Esophagus muscularis mucosa (tissue), 4 donors: ENCODE measurements at regions of chr4 and their contacts with region 1.

Region 1: DNA sequence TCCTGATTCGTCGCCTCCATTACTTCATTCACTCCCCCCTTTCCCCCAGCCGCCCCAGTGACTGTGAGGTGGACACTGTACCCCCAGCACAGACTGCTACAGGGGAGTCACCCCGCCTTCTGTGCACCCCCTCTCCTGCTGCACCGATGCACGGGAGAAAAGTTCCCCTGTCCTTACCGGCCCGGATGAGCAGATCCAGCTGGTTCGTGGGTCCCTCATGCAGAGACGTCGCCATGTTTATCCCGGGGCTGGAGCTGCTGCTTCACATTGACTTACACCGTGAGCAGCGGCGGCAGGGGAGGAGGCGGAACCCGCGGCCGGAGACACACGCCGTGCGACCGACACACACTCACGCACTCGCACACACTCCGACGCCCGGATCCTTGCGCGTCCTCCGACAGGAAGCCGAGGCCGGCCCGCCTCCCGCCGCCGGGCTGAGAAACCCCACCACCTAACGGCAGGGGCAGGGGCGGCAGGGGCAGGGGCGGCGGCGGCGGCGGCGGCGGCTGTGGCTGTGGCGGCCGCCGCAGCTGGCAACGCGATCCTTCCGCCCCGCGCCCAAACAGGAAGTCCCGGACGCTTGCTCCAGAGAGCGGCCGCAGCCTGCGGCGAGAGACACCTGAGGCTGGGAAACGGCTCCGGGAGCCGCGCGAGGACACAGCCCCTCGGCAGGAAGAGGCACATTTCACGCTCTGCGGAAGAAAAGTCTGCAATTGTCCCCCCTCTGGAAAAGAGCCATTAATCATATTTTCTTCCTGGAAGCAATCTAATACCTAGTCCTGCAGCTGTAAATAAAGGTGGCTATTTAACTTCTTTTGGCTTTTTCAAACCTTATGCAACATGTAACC is 68.6 kb downstream of the NOCT start:
- DNase-seq: peak; percentile 95
- H3K4me3 ChIP-seq: peak overlapping the region; percentile 70 to 89 (median 78)
- H3K27ac ChIP-seq: peak overlapping the region; percentile 90 to 97 (median 96)
- H3K4me1 ChIP-seq: peaks cover 30 to 49% (median 43%) of the 10 kb centered on the region in 4 donors
- H3K27me3 ChIP-seq: no peaks in the 10 kb centered on the region
- CTCF ChIP-seq: peak; percentile 30 to 46 (median 34)
- EP300 ChIP-seq: no peak
- POLR2A ChIP-seq: no peak

Region 2: DNA sequence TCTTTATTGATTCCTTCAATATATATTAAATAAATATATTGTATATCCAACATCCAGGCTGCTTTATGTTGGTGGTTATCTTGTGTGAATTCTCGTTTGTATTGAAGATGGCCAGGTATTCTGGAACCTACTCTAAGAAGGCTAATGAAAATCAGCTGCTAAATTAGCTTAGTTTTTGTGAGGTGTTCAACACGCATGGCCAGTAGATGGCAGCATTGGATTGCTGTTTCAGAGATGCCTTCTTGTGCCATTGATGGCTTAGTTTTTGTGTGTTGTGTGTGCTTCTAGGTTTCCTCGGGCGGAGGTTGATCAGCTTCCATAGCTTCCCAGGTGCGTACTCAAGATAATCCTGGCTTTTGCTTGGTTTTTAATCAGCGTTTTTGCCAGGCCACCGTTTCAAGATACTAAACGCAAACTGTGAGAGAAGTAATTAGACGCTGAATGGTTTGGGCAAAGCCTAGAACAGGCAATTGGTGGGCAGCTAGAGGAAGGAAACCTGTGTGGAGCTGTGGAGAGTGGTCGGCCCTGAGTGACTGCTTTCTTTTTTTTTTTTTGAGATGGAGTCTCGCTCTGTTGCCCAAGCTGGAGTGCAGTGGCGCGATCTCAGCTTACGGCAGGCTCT is 53.5 kb before region 1 on chr4:
- intact Hi-C with region 1: loop called (anchors 5 kb)
- DNase-seq: no peak
- H3K4me3 ChIP-seq: no peak overlapping the region
- H3K27ac ChIP-seq: no peak overlapping the region
- H3K4me1 ChIP-seq: peaks cover 3 to 48% (median 13%) of the 10 kb centered on the region in 4 donors
- H3K27me3 ChIP-seq: no peaks in the 10 kb centered on the region
- CTCF ChIP-seq: peak; percentile 76 to 84 (median 79)
- EP300 ChIP-seq: no peak
- POLR2A ChIP-seq: no peak

Region 3: DNA sequence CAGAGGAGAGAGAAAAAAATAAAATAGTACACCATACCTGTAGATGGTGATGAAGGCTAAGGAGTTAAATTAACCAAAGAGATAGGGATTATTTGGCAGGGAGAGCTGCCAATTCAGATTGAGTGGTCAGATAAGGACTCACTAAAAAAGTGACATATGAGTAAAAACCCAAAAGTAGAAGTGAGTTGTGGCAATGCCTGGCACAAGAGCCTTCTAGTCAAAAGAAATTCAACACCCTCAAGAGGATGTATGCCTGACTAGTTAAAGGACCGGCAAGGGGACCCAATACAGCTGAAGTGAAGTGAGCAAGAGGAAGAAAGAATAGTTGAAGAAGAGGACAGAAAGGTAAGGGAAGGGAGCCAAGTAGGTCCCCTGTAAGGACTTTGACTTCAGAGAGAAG is 57.9 kb after region 1 on chr4:
- intact Hi-C with region 1: no loop called
- DNase-seq: no peak
- H3K4me3 ChIP-seq: no peak overlapping the region
- H3K27ac ChIP-seq: no peak overlapping the region
- H3K4me1 ChIP-seq: peaks cover 43 to 65% (median 58%) of the 10 kb centered on the region in 4 donors
- H3K27me3 ChIP-seq: no peaks in the 10 kb centered on the region
- CTCF ChIP-seq: no peak
- EP300 ChIP-seq: no peak
- POLR2A ChIP-seq: no peak

Region 4: DNA sequence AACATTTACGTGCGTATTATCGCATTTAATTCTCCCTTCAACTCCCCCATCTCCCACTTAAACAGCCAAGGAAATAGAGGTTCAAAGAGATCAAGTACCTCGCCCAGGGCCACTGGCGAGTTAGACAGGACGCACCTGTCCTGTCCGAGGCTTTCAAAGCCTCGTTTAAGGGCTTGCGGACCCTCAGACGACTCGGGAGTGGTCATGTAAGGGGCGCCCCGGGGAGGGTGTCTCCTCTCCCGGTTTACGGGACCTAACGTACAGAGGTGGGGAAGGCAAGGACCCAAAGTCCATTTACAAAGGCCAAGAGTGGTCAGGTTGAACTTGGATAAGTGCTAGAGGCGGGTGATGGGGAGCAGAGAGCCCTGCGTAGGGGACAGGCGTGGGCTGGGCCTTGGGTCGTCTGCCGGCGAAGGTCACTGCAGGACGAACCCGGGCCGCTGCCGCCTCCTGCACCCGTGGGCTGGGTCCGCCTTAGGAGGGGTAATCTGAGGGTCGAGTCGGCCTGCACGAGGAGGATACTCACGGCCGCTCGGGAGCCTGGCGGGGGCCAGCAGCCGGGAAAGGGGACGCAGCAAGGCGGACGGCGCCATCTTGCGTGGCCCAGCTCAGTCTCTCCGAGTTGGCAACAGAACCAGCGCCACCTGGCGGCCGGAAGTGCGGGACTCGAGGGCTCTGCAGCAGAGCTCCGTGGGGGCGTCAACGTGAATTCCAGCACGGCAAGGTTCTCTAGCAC is 211.2 kb after region 1 on chr4:
- intact Hi-C with region 1: loop called (anchors 5 kb)
- DNase-seq: peak; percentile 100
- H3K4me3 ChIP-seq: peak overlapping the region; percentile 68 to 78 (median 70)
- H3K27ac ChIP-seq: peak overlapping the region; percentile 83 to 87 (median 84)
- H3K4me1 ChIP-seq: peaks cover 14 to 61% (median 43%) of the 10 kb centered on the region in 4 donors
- H3K27me3 ChIP-seq: no peaks in the 10 kb centered on the region
- CTCF ChIP-seq: peak; percentile 91 to 98 (median 94)
- EP300 ChIP-seq: no peak
- POLR2A ChIP-seq: no peak

Region 5: GRCh38 chr4:139453371-139454110 is 369.4 kb after region 1 on chr4:
- intact Hi-C with region 1: loop called (anchors 10 kb)
- DNase-seq: peak; percentile 99
- H3K4me3 ChIP-seq: peak overlapping the region; percentile 76 to 93 (median 81)
- H3K27ac ChIP-seq: peak overlapping the region; percentile 92 to 99 (median 96)
- H3K4me1 ChIP-seq: peaks cover 36 to 50% (median 49%) of the 10 kb centered on the region in 4 donors
- H3K27me3 ChIP-seq: no peaks in the 10 kb centered on the region
- CTCF ChIP-seq: peak in 1 of 3 experiments; percentile 7
- EP300 ChIP-seq: no peak
- POLR2A ChIP-seq: peak; percentile 63